ENCODE measurements at regions of chr10 and their contacts with region 1.

Region 1: GRCh38 chr10:97025613-97026242 is 160.0 kb downstream of the SLIT1 start:
- DNase-seq: peak; percentile 69
- ATAC-seq: peak; percentile 92
- H3K4me3 Mint-ChIP-seq: no peak overlapping the region
- H3K27ac Mint-ChIP-seq: no peak overlapping the region
- H3K4me1 Mint-ChIP-seq: peaks cover 8% of the 10 kb centered on the region
- H3K27me3 Mint-ChIP-seq: no peaks in the 10 kb centered on the region
- CTCF ChIP-seq: peak; percentile 88

Region 2: GRCh38 chr10:96978621-96979154 is 47.0 kb before region 1 on chr10:
- CTCF ChIA-PET with region 1: interaction called, 18 read pairs
- POLR2A ChIA-PET with region 1: no interaction called
- DNase-seq: no peak
- ATAC-seq: no peak
- H3K4me3 Mint-ChIP-seq: no peak overlapping the region
- H3K27ac Mint-ChIP-seq: no peak overlapping the region
- H3K4me1 Mint-ChIP-seq: peaks cover 2% of the 10 kb centered on the region; the same call in 1 of the 2 replicates
- H3K27me3 Mint-ChIP-seq: no peaks in the 10 kb centered on the region
- CTCF ChIP-seq: no peak

Region 3: GRCh38 chr10:96991313-96991841 is 34.4 kb before region 1 on chr10:
- CTCF ChIA-PET with region 1: interaction called, 12 read pairs
- POLR2A ChIA-PET with region 1: no interaction called
- DNase-seq: no peak
- ATAC-seq: no peak
- H3K4me3 Mint-ChIP-seq: no peak overlapping the region
- H3K27ac Mint-ChIP-seq: no peak overlapping the region
- H3K4me1 Mint-ChIP-seq: peaks cover 5% of the 10 kb centered on the region; the same call in 1 of the 2 replicates
- H3K27me3 Mint-ChIP-seq: no peaks in the 10 kb centered on the region
- CTCF ChIP-seq: no peak

Region 4: GRCh38 chr10:97010695-97011206 is 15.0 kb before region 1 on chr10:
- CTCF ChIA-PET with region 1: interaction called, 36 read pairs
- POLR2A ChIA-PET with region 1: no interaction called
- DNase-seq: no peak
- ATAC-seq: no peak
- H3K4me3 Mint-ChIP-seq: no peak overlapping the region
- H3K27ac Mint-ChIP-seq: no peak overlapping the region
- H3K4me1 Mint-ChIP-seq: peaks cover under 1% of the 10 kb centered on the region; the same call in 1 of the 2 replicates
- H3K27me3 Mint-ChIP-seq: peaks cover 3% of the 10 kb centered on the region; the same call in 1 of the 2 replicates
- CTCF ChIP-seq: no peak

Region 5: GRCh38 chr10:97059006-97059871 is 33.5 kb after region 1 on chr10:
- CTCF ChIA-PET with region 1: interaction called, 14 read pairs
- POLR2A ChIA-PET with region 1: no interaction called
- DNase-seq: peak; percentile 66
- ATAC-seq: peak; percentile 89
- H3K4me3 Mint-ChIP-seq: no peak overlapping the region
- H3K27ac Mint-ChIP-seq: no peak overlapping the region
- H3K4me1 Mint-ChIP-seq: peaks cover 8% of the 10 kb centered on the region
- H3K27me3 Mint-ChIP-seq: no peaks in the 10 kb centered on the region
- CTCF ChIP-seq: no peak

Region 6: GRCh38 chr10:97210543-97210961 is 184.8 kb after region 1 on chr10:
- CTCF ChIA-PET with region 1: interaction called, 12 read pairs
- POLR2A ChIA-PET with region 1: no interaction called
- DNase-seq: peak; percentile 91
- ATAC-seq: peak; percentile 93
- H3K4me3 Mint-ChIP-seq: no peak overlapping the region
- H3K27ac Mint-ChIP-seq: no peak overlapping the region
- H3K4me1 Mint-ChIP-seq: no peaks in the 10 kb centered on the region
- H3K27me3 Mint-ChIP-seq: no peaks in the 10 kb centered on the region
- CTCF ChIP-seq: peak; percentile 98